ENCODE measurements at regions of chr1 and their contacts with region 1.

Region 1: DNA sequence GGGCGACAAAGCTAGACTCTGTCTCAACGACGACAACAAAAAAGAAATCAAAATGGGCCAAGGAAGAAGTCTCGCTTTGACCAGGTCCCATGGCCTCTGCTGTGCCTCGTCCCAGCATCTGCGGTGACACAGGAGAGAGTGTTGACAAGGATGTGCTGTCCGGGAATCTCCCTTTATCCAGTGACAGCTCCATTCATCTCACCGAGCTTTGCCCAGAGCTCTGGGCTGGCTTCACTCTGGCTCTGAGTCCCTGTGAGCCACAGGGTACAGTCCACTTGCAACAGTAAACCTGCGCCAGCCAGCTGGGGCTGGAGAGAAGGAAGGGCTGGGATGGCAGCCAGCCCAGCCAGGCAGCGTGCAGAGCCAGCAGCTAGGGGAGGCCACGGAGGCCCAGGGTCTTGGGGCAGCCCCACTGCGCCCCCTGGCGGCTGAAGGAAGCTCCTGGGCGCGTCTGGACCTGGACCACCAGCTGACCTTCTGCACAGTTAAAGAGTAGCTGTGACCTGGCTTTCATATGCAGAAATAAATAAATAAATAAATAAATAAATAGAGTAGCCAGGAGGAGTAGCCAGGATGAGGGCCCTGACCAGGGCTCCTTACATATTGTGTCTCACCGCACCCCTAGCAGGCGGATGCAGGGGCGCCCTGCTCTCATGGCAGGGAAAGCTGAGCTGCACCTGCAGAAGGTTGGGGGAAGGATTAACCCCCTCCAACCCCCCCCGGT is 29.7 kb downstream of the ENO1 start:
- DNase-seq: peak; percentile 69
- H3K4me3 ChIP-seq: no peak overlapping the region
- CTCF ChIP-seq: peak; percentile 98

Region 2: DNA sequence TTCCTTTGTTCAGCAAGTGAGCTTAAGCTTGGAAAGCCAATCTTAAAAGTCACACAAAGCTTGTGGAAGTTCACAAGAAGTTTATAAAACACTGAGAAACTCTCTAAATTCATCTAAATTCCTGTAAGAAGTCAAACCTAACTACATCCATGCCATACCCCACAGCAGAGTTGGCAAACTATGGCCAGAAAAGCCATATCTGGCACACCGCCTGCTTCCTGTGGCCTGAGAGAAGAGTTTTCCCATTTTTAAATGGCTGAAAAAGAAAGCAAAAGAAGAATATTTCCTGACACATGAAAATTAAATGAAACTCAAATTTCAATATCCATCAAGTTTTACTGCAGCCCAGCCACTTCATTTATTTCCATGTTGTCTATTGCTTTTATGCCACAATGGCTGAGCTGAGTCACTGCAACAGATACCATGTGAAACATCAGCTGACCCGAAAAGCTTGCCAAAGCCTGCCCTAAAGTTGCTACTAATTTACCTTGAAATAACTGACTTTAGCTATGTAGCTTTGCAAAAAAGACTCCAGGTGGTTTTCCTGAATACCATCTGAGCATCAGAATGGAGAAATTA is 293.8 kb before region 1 on chr1:
- CTCF ChIA-PET with region 1: interaction called, 16 read pairs
- POLR2A ChIA-PET with region 1: no interaction called
- DNase-seq: no peak
- H3K4me3 ChIP-seq: no peak overlapping the region
- CTCF ChIP-seq: no peak

Region 3: GRCh38 chr1:8702850-8703810 is 145.7 kb before region 1 on chr1:
- CTCF ChIA-PET with region 1: interaction called, 29 read pairs
- POLR2A ChIA-PET with region 1: no interaction called
- DNase-seq: no peak
- H3K4me3 ChIP-seq: peak overlapping the region; percentile 59
- CTCF ChIP-seq: peak; percentile 24

Region 4: GRCh38 chr1:8727809-8728213 is 121.0 kb before region 1 on chr1:
- CTCF ChIA-PET with region 1: interaction called, 15 read pairs
- POLR2A ChIA-PET with region 1: no interaction called
- DNase-seq: no peak
- H3K4me3 ChIP-seq: no peak overlapping the region
- CTCF ChIP-seq: no peak

Region 5: DNA sequence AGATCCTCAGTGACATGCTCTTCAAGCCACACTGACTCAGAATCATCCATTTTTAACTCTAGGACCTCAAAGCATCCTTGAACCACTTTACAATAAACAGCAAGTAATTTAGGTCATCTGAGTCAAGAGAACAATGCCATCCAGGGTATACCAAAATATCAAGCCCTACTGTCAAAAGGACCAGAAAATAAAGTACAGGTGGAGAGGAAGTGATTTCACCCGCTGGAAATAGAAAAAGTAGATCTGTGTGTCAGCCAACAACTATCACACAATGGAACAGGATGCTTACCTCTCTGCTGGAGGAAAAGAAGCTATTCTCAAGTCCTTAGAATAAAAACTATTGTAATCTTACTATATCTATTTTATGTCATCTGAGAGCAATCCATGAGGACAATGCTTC is 68.4 kb before region 1 on chr1:
- CTCF ChIA-PET with region 1: interaction called, 11 read pairs
- POLR2A ChIA-PET with region 1: no interaction called
- DNase-seq: no peak
- H3K4me3 ChIP-seq: no peak overlapping the region
- CTCF ChIP-seq: no peak

Region 6: DNA sequence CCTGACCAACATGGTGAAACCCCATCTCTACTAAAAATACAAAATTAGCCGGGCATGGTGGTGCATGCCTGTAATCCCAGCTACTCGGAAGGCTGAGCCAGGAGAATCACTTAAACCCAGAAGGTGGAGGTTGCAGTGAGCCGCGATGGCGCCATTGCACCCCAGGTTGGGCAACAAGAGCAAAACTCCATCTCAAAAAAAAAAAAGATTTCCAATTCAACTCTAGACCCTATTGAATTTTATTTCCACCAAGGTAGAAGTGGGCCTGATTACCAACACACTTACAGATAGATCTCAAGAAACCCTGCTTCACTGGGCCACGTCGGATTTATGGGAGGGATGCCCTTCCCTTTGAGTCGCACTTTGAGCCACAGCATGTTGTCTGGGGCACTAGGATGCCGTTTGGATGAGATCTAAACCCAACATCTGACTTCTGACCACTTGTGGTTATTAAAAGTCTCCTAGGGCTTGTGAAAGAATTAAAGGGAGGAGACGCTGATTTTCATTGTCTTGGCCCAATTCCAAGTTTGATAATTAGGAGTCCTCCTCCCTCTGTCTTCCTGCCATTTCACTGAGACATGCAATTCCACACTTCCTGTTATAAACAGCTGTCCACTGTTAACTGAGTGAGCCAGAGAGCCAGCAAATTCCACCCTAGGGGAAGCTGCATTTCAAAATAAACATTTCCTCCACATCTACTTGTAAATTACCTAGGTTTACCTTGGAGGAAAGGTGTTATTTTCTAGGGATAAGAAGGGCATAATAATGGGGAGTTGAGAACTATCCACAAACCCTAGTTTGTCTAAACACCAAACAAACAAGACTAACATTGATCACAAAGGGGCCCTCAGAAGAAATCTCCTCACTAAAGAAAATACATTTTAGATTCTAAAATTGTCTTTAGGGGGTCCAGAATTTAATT is 26.2 kb before region 1 on chr1:
- CTCF ChIA-PET with region 1: interaction called, 19 read pairs
- POLR2A ChIA-PET with region 1: interaction called, 3 read pairs
- DNase-seq: peak; percentile 77
- H3K4me3 ChIP-seq: no peak overlapping the region
- CTCF ChIP-seq: no peak

Region 7: GRCh38 chr1:8858888-8859706 is 10.3 kb after region 1 on chr1:
- CTCF ChIA-PET with region 1: interaction called, 131 read pairs
- POLR2A ChIA-PET with region 1: interaction called, 11 read pairs
- DNase-seq: no peak
- H3K4me3 ChIP-seq: no peak overlapping the region
- CTCF ChIP-seq: peak; percentile 60

Region 8: GRCh38 chr1:8889925-8890785 is 41.3 kb after region 1 on chr1:
- CTCF ChIA-PET with region 1: no interaction called
- POLR2A ChIA-PET with region 1: no interaction called
- DNase-seq: peak; percentile 59
- H3K4me3 ChIP-seq: 0 out of 2 replicates have a peak overlapping the region, but pooled peaks have one; percentile 6
- CTCF ChIP-seq: no peak